ENCODE measurements at regions of chr2 and their contacts with region 1.

Region 1: DNA sequence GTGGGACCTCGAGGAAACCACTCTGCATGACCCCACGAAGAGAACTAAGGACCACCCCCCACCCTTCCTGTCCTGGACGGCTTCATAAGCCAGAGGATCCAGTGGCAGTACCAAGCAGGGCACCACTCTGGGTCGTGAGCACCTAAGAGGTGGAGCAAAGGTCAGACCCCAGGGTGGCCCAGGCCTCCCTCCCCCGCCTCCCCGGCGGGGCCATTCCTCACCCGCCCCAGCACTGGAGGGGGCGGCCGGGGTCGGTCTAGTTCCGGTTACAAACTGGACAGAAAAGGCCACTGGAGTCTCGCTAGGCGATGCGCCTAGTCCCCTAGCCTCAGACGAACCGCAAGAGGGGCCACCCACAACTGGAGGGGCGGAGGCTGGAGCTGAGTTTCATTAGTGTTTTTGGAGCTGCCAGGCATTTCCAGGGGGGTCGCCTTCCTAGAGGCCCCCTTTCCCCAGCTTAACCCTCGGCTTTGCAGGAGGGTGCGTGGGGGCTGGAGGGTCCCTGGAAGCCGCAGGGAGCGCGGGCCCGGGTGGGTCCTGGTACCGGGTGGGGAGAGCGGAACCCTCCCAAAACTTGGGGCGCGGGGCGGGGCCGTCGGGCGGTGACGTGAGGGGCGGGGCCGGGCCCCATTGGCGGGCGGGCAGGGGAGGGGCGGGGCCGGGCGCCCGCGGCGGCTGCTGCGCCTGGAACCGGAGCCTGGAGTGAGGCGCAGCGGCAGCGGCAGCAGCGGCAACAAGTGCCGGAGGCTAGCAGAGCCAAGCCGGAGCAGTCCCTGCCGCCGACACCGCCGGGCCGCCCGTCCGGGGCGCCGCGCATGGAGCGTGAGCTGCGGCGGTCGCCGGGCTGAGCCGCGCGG is at the start of gene B3GNT2:
- DNase-seq: peak; percentile 86
- ATAC-seq: peak; percentile 93 to 95
- total RNA-seq, gene B3GNT2: 13.4 to 13.8 TPM

Region 2: DNA sequence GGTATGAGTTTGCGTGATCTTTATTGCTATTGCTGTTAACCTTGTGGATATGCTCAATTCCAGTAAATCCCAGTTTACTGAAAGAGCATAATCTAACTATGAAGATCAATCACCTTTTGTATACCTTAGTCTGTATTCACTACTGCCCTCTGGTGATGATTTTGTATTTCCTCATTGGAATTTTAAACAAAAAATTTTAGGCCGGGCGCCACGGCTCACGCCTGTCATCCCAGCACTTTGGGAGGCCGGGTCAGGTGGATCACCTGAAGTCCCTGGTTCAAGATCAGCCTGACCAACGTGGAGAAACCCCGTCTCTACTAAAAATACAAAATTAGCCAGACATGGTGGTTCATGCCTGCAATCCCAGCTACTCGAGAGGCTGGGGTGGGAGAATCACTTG is 285.0 kb before region 1 on chr2:
- intact Hi-C with region 1: loop called in 1 of 2 experiments (anchors 10 kb)
- DNase-seq: no peak
- ATAC-seq: no peak

Region 3: DNA sequence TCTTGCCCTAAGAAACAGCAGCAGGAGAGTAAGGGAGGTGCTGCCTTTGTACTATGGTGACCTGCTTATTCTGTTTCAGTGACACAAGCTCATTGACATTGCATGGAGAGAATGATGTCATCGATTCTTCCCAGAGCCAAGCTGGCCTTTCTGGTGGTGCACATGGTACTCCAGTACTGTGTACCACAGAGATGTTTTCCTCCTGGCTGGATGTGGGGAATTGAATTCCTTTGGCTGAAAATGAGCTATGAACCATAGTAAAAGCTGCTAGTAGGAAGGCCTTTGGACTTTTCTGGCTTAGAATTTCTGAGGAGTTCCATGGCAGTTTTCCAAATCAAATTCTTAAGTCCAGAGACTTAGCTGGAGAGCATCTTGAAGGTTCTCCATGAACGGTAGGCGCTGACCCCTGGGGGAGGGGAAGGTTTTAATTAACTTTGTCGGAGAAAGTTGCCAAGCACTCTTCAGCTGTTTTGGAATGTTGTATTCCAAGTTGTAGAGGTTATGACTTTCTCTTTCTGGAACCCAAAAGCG is 16.8 kb before region 1 on chr2:
- intact Hi-C with region 1: no loop called
- DNase-seq: no peak
- ATAC-seq: peak; percentile 51 to 80

Measured in left cardiac atrium (tissue), 4 donors.